Astrocyte of the cerebellum (primary cell): ENCODE measurements at regions of chr1 and their contacts with region 1.

Region 1: DNA sequence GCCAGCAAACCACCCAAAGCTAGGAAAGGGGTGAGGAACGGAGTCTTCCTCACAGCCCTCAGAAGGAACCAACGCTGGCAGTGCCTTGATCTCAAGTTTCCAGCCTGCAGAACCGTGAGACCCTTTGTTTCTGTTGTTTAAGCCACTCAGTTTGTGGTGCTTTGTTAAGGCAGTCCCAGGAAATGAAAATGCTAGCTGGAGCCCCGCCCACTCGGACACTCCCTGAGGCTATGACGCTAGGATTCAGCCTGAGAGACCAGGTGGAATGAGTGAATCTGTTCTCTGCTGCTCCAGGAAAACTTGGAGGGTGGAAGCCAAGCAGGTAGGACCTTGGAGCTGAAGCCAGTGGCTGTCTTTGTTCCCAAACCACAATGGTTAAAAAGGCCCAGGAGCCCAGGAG is 196.5 kb upstream of the POU3F1 start:
- DNase-seq: no peak
- H3K4me3 ChIP-seq: no peak overlapping the region
- CTCF ChIP-seq: no peak

Region 2: GRCh38 chr1:38285807-38286530 is 42.9 kb after region 1 on chr1:
- in situ Hi-C with region 1: no loop called
- DNase-seq: no peak
- H3K4me3 ChIP-seq: no peak overlapping the region
- CTCF ChIP-seq: no peak

Region 3: DNA sequence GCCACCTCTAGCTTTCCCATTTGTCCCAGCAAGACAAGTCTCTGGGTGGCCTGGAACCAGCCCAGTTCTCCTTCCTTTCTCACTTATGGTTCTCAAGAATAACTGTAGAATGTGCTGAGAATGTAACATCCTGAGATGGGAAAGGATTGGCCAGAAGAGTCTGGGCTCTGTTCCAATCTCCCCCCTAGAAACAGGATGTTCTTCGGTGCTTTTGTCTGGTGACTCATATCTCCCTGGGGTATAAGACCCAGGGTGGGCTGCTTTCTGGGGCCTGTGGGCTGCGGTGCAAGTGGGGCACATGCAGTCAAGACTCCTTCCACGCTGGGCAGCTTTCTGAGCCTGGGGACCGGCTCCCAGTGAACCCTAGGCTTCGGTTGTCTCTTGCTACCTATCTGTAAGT is 54.7 kb after region 1 on chr1:
- in situ Hi-C with region 1: loop called (anchors 5 kb)
- DNase-seq: peak; percentile 48
- H3K4me3 ChIP-seq: no peak overlapping the region
- CTCF ChIP-seq: no peak